ENCODE measurements at regions of chr7 and their contacts with region 1.

Region 1: GRCh38 chr7:41977151-41977651 is 259.8 kb downstream of the GLI3 start:
- DNase-seq: no peak
- H3K4me3 ChIP-seq: no peak overlapping the region
- H3K27ac ChIP-seq: peak overlapping the region in 1 of 2 donors; percentile 26
- H3K4me1 ChIP-seq: peaks cover 0 to 31% (median 14%) of the 10 kb centered on the region in 4 donors
- H3K27me3 ChIP-seq: no peaks in the 10 kb centered on the region
- CTCF ChIP-seq: peak; percentile 64 to 66

Region 2: DNA sequence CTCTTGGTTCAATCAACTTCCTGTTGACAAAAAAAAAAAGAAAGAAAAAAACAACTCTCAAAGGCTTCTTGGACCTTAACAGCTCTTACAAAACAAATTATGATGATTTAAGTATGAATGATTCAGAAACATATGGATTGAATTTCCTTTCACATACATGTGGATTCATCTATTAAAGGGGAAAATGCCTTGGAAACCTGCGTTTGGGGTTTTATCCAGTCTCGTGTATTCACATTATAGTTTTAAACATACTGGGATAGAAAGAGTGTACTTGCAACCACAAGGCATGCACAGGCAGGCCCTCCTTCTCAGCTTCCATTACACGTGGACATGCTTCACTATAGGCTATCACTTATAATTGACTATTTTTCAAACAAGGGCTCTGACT is 561.0 kb before region 1 on chr7:
- intact Hi-C with region 1: no loop called
- DNase-seq: no peak
- H3K4me3 ChIP-seq: no peak overlapping the region
- H3K27ac ChIP-seq: no peak overlapping the region
- H3K4me1 ChIP-seq: no peaks in the 10 kb centered on the region
- H3K27me3 ChIP-seq: no peaks in the 10 kb centered on the region
- CTCF ChIP-seq: no peak

Region 3: GRCh38 chr7:41916450-41916959 is 60.7 kb before region 1 on chr7:
- intact Hi-C with region 1: no loop called
- DNase-seq: peak; percentile 63 to 69
- H3K4me3 ChIP-seq: no peak overlapping the region
- H3K27ac ChIP-seq: peak overlapping the region; percentile 58 to 68
- H3K4me1 ChIP-seq: peaks cover 0 to 54% (median 13%) of the 10 kb centered on the region in 4 donors
- H3K27me3 ChIP-seq: no peaks in the 10 kb centered on the region
- CTCF ChIP-seq: no peak

Region 4: DNA sequence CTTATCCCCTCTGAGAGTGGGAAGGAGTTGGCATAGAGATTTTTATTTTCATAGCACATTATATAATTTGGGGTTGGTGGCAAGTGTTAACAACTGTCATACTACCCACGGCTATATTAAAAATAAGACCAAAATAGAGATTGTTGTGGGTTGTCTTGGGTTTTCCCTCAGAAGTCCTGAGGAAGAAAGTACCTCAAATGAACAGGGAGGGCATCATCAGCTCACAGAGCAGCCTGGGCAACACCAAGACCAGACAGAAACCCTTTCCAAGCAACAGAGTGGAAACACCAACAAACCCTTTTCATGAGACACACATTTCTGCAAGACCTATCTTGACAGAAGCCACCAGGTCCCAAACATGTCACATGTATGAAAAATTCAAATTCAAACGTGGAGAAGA is 138.6 kb after region 1 on chr7:
- intact Hi-C with region 1: no loop called
- DNase-seq: no peak
- H3K4me3 ChIP-seq: no peak overlapping the region
- H3K27ac ChIP-seq: no peak overlapping the region
- H3K4me1 ChIP-seq: no peaks in the 10 kb centered on the region
- H3K27me3 ChIP-seq: no peaks in the 10 kb centered on the region
- CTCF ChIP-seq: no peak

Region 5: GRCh38 chr7:42407828-42408227 is 430.6 kb after region 1 on chr7:
- intact Hi-C with region 1: no loop called
- DNase-seq: no peak
- H3K4me3 ChIP-seq: no peak overlapping the region
- H3K27ac ChIP-seq: no peak overlapping the region
- H3K4me1 ChIP-seq: no peaks in the 10 kb centered on the region
- H3K27me3 ChIP-seq: no peaks in the 10 kb centered on the region
- CTCF ChIP-seq: no peak

Region 6: DNA sequence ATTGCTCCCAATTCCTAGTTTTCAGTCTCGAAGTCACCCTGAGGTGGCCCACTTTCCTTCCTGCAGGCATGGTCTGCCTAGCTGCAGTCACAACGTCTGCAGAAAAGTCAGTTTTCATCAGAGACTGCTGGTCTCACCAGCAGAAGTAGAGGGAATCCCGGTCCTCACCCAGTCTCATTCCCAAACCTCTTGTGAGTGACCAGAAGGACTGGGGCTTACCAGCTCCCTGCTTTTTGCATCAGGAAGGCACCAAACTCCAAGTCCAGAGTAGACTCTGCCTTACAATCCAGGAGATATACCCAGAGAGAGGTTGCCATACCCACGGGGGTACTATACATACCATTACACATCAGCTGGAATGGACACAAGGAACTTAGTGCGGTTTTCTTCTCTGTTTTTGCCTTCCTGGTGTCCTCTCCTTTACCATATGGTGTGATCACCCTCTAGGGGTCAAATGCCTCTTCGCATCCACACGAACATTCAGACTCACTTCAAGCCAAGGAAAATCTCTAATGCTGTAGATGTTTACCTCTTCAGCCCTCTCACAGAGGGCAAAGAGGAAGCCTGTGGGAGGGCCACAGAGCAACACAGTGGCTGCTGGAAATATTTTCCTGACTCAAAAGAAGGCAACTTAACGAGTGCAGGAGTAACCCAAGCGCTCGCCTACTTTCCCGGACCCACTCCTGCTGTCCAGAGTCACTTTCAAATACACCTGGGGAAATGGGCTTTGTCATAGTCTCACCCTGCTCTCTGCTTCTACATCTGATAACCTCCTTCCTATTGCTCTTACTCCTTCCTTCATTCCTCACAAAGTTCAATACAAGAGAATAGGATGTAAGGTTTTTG is 713.8 kb after region 1 on chr7:
- intact Hi-C with region 1: loop called (anchors 5 kb)
- DNase-seq: peak in 1 of 2 donors; percentile 29
- H3K4me3 ChIP-seq: no peak overlapping the region
- H3K27ac ChIP-seq: no peak overlapping the region
- H3K4me1 ChIP-seq: peaks cover 0 to 30% (median 13%) of the 10 kb centered on the region in 4 donors
- H3K27me3 ChIP-seq: no peaks in the 10 kb centered on the region
- CTCF ChIP-seq: peak; percentile 53 to 57

Region 7: GRCh38 chr7:42831718-42832431 is 854.7 kb after region 1 on chr7:
- intact Hi-C with region 1: loop called (anchors 5 kb)
- DNase-seq: peak in 1 of 2 donors; percentile 25
- H3K4me3 ChIP-seq: no peak overlapping the region
- H3K27ac ChIP-seq: no peak overlapping the region
- H3K4me1 ChIP-seq: peaks cover 0 to 11% (median 10%) of the 10 kb centered on the region in 4 donors
- H3K27me3 ChIP-seq: no peaks in the 10 kb centered on the region
- CTCF ChIP-seq: peak; percentile 60 to 61